Posterior vena cava (tissue), 2 donors: ENCODE measurements at regions of chr3 and their contacts with region 1.

Region 1: GRCh38 chr3:101809178-101810021 is 30.4 kb downstream of the NXPE3 start:
- DNase-seq: no peak

Region 2: DNA sequence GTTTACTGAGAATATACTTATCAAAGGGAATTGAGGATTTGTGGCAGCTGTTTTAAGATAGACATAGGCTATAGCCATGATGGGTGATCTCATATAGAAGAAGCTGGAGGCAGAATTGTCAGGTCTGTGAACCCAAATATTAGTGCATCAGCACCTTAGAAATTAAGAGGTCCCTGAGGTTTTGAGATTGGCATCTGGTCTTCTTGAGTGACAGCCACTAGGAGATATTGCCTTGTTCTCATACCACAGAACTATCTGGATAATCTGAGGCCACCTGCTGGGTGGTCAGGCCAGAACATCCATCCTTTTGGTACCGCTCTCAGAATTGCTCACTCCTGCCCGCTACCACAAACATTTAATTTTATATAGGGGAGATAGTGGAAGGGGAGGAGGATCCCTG is 414.7 kb after region 1 on chr3:
- intact Hi-C with region 1: loop called (anchors 5 kb)
- DNase-seq: no peak

Region 3: GRCh38 chr3:102229062-102229655 is 419.8 kb after region 1 on chr3:
- intact Hi-C with region 1: loop called (anchors 5 kb)
- DNase-seq: peak; percentile 84

Region 4: GRCh38 chr3:102532901-102533300 is 723.5 kb after region 1 on chr3:
- intact Hi-C with region 1: loop called in 1 of 2 experiments (anchors 5 kb)
- DNase-seq: no peak